Activated naive CD4-positive, alpha-beta T cell treated with anti-CD3 and anti-CD28 coated beads for 36 hours (primary cell): ENCODE measurements at regions of chr3 and their contacts with region 1.

Region 1: DNA sequence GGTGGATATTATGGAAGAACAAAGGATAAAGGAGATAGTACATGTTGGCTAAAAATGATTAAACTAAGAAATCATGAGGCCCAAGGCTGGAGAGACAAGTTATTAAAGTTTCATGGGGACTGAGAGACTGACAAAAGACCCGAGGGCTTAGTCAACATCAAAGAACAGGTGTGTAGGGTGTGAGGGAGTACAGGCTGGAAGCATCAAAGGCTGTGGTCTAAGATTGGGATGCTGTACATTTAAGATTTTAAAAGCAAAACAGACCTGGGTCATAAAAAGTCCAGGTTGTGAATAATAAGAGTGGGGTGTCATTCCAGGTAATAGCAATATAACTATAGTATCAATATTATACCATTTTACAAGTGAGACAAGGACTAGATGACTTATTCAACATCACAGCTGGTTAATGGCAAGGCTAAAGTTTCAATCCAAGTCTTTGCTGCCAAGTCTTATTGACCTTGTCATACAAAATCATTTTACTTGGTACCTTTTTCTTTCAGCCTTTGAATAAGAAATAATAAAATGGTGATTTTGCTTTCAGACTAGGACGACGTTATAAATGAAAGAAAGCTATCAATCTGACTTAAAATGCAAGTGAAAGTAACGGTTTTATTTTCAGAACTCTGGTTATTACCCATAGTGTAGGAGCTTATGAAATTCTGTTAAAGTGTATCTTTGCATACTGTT is 211.6 kb downstream of the TNIK start:
- DNase-seq: no peak
- H3K4me3 Mint-ChIP-seq: no peak overlapping the region
- H3K27ac Mint-ChIP-seq: no peak overlapping the region
- H3K4me1 Mint-ChIP-seq: peaks cover 45% of the 10 kb centered on the region
- H3K27me3 Mint-ChIP-seq: no peaks in the 10 kb centered on the region

Region 2: GRCh38 chr3:171088964-171089754 is 159.4 kb before region 1 on chr3:
- CTCF ChIA-PET with region 1: no interaction called
- intact Hi-C with region 1: no loop called
- DNase-seq: peak; percentile 8
- H3K4me3 Mint-ChIP-seq: no peak overlapping the region
- H3K27ac Mint-ChIP-seq: no peak overlapping the region
- H3K4me1 Mint-ChIP-seq: peaks cover 5% of the 10 kb centered on the region
- H3K27me3 Mint-ChIP-seq: no peaks in the 10 kb centered on the region

Region 3: DNA sequence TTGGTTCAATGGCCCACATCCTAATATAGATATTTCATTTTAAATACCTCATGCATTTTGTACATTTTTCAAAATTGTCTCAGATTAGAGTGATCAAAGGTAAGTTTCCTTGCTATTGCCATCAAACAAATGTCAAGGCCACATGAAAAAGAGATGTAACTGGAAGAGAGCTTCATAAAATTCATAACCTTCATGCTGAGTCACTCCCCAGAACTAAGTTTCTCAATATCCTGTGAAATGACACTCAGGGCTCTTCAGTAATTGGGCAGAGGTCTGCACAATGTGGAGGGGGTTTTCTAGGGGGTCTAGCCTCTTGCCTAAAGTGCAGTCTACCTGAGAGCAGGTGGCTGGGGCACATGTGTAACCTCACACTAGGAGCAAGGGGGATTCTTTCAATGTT is 69.9 kb before region 1 on chr3:
- CTCF ChIA-PET with region 1: no interaction called
- intact Hi-C with region 1: loop called (anchors 1 kb)
- DNase-seq: peak; percentile 25
- H3K4me3 Mint-ChIP-seq: no peak overlapping the region
- H3K27ac Mint-ChIP-seq: peak overlapping the region; percentile 74
- H3K4me1 Mint-ChIP-seq: peaks cover 40% of the 10 kb centered on the region
- H3K27me3 Mint-ChIP-seq: no peaks in the 10 kb centered on the region

Region 4: GRCh38 chr3:171225708-171226107 is 22.9 kb before region 1 on chr3:
- CTCF ChIA-PET with region 1: interaction called, 4 read pairs
- intact Hi-C with region 1: loop called (anchors 1 kb)
- DNase-seq: no peak
- H3K4me3 Mint-ChIP-seq: no peak overlapping the region
- H3K27ac Mint-ChIP-seq: peak overlapping the region; percentile 56
- H3K4me1 Mint-ChIP-seq: peaks cover 50% of the 10 kb centered on the region
- H3K27me3 Mint-ChIP-seq: no peaks in the 10 kb centered on the region

Region 5: GRCh38 chr3:171284308-171285075 is 35.9 kb after region 1 on chr3:
- CTCF ChIA-PET with region 1: no interaction called
- intact Hi-C with region 1: loop called (anchors 1 kb)
- DNase-seq: peak; percentile 55
- H3K4me3 Mint-ChIP-seq: peak overlapping the region; percentile 22
- H3K27ac Mint-ChIP-seq: peak overlapping the region; percentile 76
- H3K4me1 Mint-ChIP-seq: peaks cover 66% of the 10 kb centered on the region
- H3K27me3 Mint-ChIP-seq: no peaks in the 10 kb centered on the region

Region 6: DNA sequence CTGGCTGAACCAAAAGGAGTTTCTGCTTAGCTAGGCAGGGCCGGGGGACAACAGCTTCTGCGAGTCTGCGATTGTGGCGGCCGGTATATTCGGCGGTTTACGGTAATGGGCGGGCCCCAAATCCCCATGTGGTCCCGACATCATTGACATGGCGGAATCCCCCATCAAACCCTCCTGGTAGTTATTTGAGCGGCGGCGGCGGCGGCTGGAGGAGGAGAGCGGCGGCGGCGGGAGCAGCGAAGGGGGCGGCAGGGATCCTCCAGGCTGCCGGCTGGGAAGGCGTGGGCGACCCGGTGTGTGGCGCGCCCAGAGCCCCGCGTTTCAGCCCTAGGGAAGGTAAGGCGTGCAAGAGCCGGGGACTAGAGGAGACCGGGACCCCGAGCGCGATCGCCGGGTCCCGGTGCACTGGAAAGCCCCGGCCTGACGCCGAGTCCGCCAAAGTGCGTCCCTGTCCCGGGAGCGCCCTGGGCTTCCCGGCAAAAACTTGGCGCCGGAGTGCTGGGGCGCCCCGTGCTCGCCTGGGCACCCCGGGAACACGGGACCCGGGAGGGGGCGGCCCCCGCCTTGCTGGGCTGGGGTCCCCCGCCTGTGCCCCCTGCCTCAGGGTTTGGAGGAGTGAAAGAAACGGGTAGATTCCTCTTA is 791.0 kb after region 1 on chr3 and contains the start of gene FNDC3B:
- CTCF ChIA-PET with region 1: no interaction called
- intact Hi-C with region 1: loop called (anchors 10 kb)
- DNase-seq: peak; percentile 96
- H3K4me3 Mint-ChIP-seq: peak within 1 kb of the TSS; percentile 91
- H3K27ac Mint-ChIP-seq: peak within 1 kb of the TSS; percentile 89
- H3K4me1 Mint-ChIP-seq: peaks cover 21% of the 10 kb centered on the region
- H3K27me3 Mint-ChIP-seq: no peaks in the 10 kb centered on the region
- total RNA-seq, gene FNDC3B: 9.2 to 13.5 TPM

Region 7: DNA sequence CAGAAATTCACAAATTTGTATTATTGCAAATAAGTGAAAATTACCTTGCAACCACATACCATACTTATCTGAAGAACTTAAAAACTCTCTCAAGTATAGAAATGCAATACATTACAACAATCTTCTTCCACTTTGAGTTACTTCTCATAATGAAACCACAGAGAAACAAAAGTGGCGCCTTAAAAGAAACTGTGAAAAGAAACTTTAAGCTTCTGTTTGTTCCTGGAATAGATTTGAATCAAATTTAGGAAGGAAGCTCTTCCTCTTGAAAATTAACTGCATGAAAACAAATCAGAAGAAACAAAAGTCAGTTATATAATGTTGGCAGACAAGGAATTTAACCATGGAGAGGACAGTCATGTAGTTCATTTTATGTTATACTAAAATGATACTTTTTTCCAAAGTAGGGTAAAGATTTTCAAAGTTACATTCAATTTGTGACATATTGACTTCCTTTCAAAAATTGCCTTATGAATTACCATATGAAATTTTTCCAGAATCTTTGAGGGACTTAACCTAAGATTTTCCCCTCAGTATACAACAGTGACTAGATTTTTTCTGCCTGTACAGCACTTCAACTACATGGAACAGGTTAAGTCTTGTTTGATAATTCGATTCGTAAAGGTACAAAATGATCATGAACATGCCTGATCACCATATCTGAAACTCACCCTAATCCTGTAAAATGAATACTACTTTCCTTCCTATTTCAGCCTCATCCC is 1332.3 kb after region 1 on chr3:
- CTCF ChIA-PET with region 1: no interaction called
- intact Hi-C with region 1: loop called (anchors 5 kb)
- DNase-seq: no peak
- H3K4me3 Mint-ChIP-seq: peak overlapping the region; percentile 22
- H3K27ac Mint-ChIP-seq: peak overlapping the region; percentile 85
- H3K4me1 Mint-ChIP-seq: peaks cover 85% of the 10 kb centered on the region
- H3K27me3 Mint-ChIP-seq: no peaks in the 10 kb centered on the region